ENCODE measurements at regions of chr5 and their contacts with region 1.

Region 1: GRCh38 chr5:177113566-177114424 is 19.8 kb upstream of the NSD1 start:
- DNase-seq: peak in 41 of 42 donors; percentile 67 to 93 (median 83)

Region 2: GRCh38 chr5:177256296-177256695 is 142.5 kb after region 1 on chr5:
- intact Hi-C with region 1: no loop called
- DNase-seq: no peak

Region 3: DNA sequence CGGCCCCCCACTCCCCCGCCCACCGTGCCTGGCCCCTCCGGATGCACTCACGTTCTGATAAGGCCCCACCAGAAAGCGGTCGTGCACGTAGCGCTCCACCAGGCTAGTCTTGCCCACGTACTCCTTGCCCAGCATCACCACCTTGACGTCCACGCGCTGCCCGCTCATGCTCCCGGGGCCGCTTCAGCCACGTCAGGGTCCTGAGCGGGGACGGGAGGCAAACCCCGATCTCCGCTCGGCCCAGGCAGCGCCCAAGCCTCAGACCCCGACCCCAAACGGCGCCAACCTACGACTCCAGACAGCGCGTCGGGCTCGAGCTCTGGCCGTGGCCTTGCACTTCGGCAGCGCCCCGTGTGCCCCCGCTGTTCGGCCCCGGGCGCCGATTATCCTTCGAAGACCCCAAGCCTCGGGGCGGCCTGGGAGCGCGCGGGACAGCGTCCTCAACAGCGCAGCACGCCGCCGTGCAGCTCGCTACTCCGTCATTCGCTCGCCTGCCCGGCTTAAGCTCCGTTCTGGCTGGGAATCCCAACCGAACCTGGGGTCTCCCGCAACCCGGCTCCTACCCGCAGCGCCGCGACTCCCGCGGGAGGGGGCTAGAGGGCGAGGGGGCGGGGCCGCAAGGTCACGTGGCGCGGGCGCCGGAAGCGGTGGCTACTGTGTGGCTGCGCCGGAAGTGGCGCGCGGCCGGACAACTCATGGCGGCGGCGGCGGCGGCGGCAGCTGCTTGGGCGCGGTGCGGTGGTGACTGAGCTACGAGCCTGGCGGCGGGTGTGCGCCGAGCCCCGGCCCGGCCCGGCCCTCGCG is 189.5 kb after region 1 on chr5 and contains the starts of genes PRELID1 and RAB24:
- intact Hi-C with region 1: loop called (anchors 5 kb)
- DNase-seq: peak; percentile 76 to 97 (median 92)

Measured in head of caudate nucleus (tissue), 42 donors.